RWPE1 (cell line): ENCODE measurements at regions of chr6 and their contacts with region 1.

Region 1: DNA sequence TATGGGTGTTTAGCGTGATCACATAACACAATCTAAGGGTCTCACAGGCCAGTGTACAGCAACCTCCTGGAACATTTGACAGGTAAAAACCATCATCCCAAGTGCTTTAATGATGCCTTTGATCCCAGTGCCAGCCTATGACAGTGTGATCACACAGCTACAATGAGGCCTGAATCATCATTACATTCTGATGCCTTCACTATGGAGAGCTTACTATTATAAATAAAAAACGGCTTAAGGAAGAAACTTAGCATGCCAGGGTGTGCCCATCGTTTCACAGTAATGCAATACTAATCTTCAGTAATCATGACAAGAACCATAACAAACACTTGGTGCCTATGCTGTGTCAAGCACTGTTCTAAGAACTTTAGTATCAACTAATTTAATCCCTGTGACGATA is 11.4 kb downstream of the MAP7 start:
- DNase-seq: no peak
- H3K27ac ChIP-seq: no peak overlapping the region
- CTCF ChIP-seq: no peak

Region 2: GRCh38 chr6:136696238-136696637 is 157.4 kb after region 1 on chr6:
- CTCF ChIA-PET with region 1: no interaction called
- POLR2A ChIA-PET with region 1: interaction called, 11 read pairs
- DNase-seq: no peak
- H3K27ac ChIP-seq: no peak overlapping the region
- CTCF ChIP-seq: no peak